ENCODE measurements at regions of chr1 and their contacts with region 1.

Region 1: GRCh38 chr1:116737020-116737854 is 17.0 kb upstream of the CD2 start:
- DNase-seq: peak; percentile 65
- H3K4me3 ChIP-seq: no peak overlapping the region
- H3K27ac ChIP-seq: peak overlapping the region in 3 of 4 donors; percentile 15 to 41 (median 31)
- H3K4me1 ChIP-seq: peaks cover 0 to 8% (median 0%) of the 10 kb centered on the region in 4 donors
- H3K27me3 ChIP-seq: no peaks in the 10 kb centered on the region
- CTCF ChIP-seq: peak; percentile 71 to 85 (median 81)
- EP300 ChIP-seq: no peak
- POLR2A ChIP-seq: no peak

Region 2: GRCh38 chr1:115098979-115099692 is 1638.1 kb before region 1 on chr1:
- in situ Hi-C with region 1: no loop called
- intact Hi-C with region 1: no loop called
- DNase-seq: peak; percentile 72
- H3K4me3 ChIP-seq: peak overlapping the region in 3 of 4 donors; percentile 34 to 48 (median 34)
- H3K27ac ChIP-seq: peak overlapping the region; percentile 83 to 88 (median 87)
- H3K4me1 ChIP-seq: peaks cover 0 to 22% (median 13%) of the 10 kb centered on the region in 4 donors
- H3K27me3 ChIP-seq: no peaks in the 10 kb centered on the region
- CTCF ChIP-seq: no peak
- EP300 ChIP-seq: peak; percentile 40
- POLR2A ChIP-seq: peak; percentile 40

Region 3: GRCh38 chr1:116754198-116754977 is 17.2 kb after region 1 on chr1 and contains the start of gene CD2:
- in situ Hi-C with region 1: no loop called
- intact Hi-C with region 1: no loop called
- DNase-seq: peak; percentile 29
- H3K4me3 ChIP-seq: peak within 1 kb of the TSS in 2 of 4 donors; percentile 10 to 29
- H3K27ac ChIP-seq: peak within 1 kb of the TSS; percentile 2 to 48 (median 38)
- H3K4me1 ChIP-seq: no peaks in the 10 kb centered on the region
- H3K27me3 ChIP-seq: no peaks in the 10 kb centered on the region
- CTCF ChIP-seq: no peak
- EP300 ChIP-seq: no peak
- POLR2A ChIP-seq: peak; percentile 60
- total RNA-seq, gene CD2: 5.0 to 8.7 (median 6.3) TPM in 3 of 4 donors, not detected in the other

Region 4: DNA sequence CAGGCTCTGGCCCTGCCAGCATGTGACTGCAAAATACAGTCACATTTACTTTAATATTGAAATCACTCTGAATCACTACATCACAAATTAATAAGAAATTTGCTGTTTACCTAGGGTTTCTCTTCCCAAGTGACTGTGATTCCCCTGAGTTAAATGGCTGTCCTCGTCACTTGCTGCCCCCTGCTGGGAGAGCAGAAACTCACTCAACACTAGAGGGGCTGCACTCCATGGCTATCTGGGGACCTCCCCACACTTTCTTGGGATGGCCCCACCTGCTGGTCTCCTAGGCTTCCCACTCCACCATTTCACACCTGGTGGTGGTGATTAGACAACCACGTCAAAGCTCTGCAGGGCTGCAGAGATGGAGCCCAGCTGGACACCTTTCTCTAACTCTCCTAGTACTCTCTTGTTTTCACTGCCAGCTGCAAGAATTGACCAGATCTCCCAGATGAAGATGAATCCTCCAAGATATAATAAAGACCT is 80.4 kb after region 1 on chr1:
- in situ Hi-C with region 1: loop called in 1 of 4 experiments (anchors 10 kb)
- intact Hi-C with region 1: no loop called
- DNase-seq: peak; percentile 47
- H3K4me3 ChIP-seq: no peak overlapping the region
- H3K27ac ChIP-seq: no peak overlapping the region
- H3K4me1 ChIP-seq: no peaks in the 10 kb centered on the region
- H3K27me3 ChIP-seq: no peaks in the 10 kb centered on the region
- CTCF ChIP-seq: peak; percentile 37 to 63 (median 52)
- EP300 ChIP-seq: no peak
- POLR2A ChIP-seq: no peak

Region 5: GRCh38 chr1:117045644-117046043 is 308.4 kb after region 1 on chr1:
- in situ Hi-C with region 1: loop called (anchors 5 to 10 kb)
- intact Hi-C with region 1: no loop called
- DNase-seq: no peak
- H3K4me3 ChIP-seq: no peak overlapping the region
- H3K27ac ChIP-seq: no peak overlapping the region
- H3K4me1 ChIP-seq: no peaks in the 10 kb centered on the region
- H3K27me3 ChIP-seq: no peaks in the 10 kb centered on the region
- CTCF ChIP-seq: no peak
- EP300 ChIP-seq: no peak
- POLR2A ChIP-seq: no peak

Region 6: GRCh38 chr1:117051224-117052064 is 314.2 kb after region 1 on chr1:
- in situ Hi-C with region 1: loop called (anchors 5 to 10 kb)
- intact Hi-C with region 1: loop called (anchors 5 kb)
- DNase-seq: peak; percentile 66
- H3K4me3 ChIP-seq: peak overlapping the region in 3 of 4 donors; percentile 0 to 20 (median 4)
- H3K27ac ChIP-seq: peak overlapping the region; percentile 70 to 80 (median 76)
- H3K4me1 ChIP-seq: peaks cover 6 to 19% (median 15%) of the 10 kb centered on the region in 4 donors
- H3K27me3 ChIP-seq: no peaks in the 10 kb centered on the region
- CTCF ChIP-seq: no peak
- EP300 ChIP-seq: no peak
- POLR2A ChIP-seq: no peak

Region 7: GRCh38 chr1:117121776-117122697 is 384.8 kb after region 1 on chr1:
- in situ Hi-C with region 1: loop called in 1 of 4 experiments (anchors 10 kb)
- intact Hi-C with region 1: no loop called
- DNase-seq: peak; percentile 97
- H3K4me3 ChIP-seq: peak overlapping the region; percentile 45 to 85 (median 68)
- H3K27ac ChIP-seq: peak overlapping the region; percentile 77 to 91 (median 86)
- H3K4me1 ChIP-seq: peaks cover 6 to 16% (median 13%) of the 10 kb centered on the region in 4 donors
- H3K27me3 ChIP-seq: peaks cover 6% of the 10 kb centered on the region
- CTCF ChIP-seq: peak; percentile 61 to 73 (median 70)
- EP300 ChIP-seq: no peak
- POLR2A ChIP-seq: no peak

Measured in transverse colon (tissue), 4 donors.